WTC11 (cell line): ENCODE measurements at regions of chr5 and their contacts with region 1.

Region 1: DNA sequence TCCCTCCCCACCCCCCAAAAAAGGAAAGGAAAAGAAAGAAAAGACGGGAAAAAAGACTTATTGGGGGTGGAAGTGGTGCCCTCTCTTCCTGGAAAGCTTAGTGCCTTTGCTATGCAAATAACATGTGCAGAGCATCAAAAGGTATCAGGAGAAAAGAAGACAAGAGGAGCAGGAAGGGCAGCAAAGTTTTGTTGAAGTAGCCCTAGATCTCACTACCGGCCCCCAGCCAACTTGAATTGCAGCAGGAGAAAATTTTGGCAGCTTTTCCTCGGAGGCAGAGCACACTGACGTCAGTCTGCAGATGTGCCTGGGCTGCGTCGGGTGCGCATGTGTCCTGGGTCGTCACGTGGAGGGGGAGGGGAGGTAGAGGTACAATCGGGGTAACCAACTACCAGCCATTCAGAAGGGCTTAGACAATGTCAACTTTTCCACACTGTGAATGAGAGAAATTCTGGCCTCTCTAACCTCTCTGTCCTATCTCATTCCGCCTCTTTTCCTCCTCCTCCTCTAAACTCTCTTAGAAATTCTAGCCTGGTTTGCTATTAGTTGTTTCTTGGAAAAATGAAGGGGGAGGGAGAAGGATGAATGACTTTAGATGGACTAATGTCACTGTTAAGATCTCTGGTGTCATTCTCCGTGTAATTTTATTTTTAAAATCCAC is at the start of gene ADAMTS6:
- DNase-seq: peak; percentile 64
- ATAC-seq: peak; percentile 82
- H3K4me3 Mint-ChIP-seq: no peak within 1 kb of the TSS
- H3K27ac Mint-ChIP-seq: peak within 1 kb of the TSS; percentile 98
- H3K4me1 Mint-ChIP-seq: peaks cover 16% of the 10 kb centered on the region
- H3K27me3 Mint-ChIP-seq: no peaks in the 10 kb centered on the region
- CTCF ChIP-seq: no peak
- total RNA-seq, gene ADAMTS6: 2.6 to 3.5 TPM (median 2.8 TPM) in 3 replicates

Region 2: DNA sequence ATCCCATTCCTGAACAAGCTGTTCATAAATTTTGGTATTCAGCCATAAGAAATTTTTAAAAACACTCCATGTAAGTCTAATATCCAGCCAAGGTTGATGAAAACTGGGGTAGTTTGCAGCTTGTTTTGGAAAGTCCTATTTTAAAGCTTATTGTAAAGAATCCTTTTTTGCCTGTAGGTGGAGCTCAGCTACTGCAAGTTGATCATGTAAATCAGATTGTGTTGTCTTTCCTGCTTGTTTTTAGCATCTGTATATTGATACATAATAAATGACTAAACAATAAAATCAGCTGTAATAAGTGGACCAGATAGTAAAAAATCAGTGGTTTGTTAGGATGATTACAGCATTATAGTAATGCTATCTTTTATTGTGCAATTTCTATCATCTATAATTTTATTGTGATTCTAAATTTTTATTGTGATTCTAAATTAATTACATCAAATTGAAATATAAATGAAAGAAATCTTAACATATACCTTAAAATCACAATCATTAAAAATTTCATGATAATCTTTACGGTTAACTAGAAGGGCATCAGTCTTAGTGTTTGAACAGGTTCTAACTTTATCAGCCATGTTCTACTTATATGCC is 670.6 kb before region 1 on chr5:
- CTCF ChIA-PET with region 1: interaction called, 43 read pairs
- POLR2A ChIA-PET with region 1: no interaction called
- DNase-seq: no peak
- ATAC-seq: no peak
- H3K4me3 Mint-ChIP-seq: no peak overlapping the region
- H3K27ac Mint-ChIP-seq: no peak overlapping the region
- H3K4me1 Mint-ChIP-seq: no peaks in the 10 kb centered on the region; the same call in 1 of the 2 replicates
- H3K27me3 Mint-ChIP-seq: no peaks in the 10 kb centered on the region
- CTCF ChIP-seq: 0 out of 2 replicates have a peak, but pooled peaks have one; percentile 28

Region 3: DNA sequence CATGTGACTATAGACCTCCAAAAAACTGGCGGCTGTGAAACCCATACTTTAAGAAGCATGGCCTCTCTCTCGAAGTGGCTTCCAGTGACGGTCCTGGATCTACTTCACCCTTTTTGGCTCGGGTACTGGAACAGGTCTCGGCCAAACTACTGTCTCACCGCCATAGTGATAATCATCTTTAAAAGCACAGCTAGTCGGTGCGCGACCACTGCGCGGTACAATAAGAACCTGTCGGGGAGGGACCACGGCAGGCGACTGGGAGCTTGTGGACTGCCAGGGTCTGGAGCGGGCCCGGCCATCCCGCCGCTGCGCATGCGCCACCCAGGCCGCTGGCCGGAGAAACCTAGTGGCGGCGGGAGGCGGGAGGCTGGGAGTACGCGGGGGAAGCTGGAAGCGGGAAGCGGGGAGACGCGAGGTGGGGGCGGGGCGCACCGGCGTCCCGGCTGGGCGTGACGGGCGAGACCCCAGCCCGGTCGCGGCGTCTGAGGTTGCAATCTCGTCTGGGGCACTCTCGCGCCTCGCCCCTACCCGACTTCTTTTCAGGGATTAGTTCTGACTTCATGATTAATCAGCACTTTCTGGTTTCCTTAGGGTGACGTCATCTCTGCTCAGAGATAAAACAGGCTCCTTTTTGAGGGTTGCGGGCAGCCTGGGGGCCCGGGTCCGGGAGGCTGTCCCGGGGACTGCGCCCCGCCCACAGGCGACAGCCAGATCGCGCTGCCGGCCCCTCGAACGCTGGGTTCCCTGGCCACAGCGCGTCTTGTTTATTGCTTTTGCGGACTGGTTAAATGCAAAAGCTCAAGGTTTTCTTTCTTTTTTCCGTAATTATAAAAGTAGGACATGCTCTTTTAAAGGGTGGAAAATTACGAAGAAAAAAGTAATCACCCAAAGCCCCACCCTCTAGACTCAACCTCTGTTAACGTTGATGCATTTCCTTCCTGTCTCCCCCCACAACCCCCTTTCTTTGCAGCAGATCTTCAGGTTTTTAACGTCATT is 446.3 kb before region 1 on chr5:
- CTCF ChIA-PET with region 1: interaction called, 11 read pairs
- POLR2A ChIA-PET with region 1: interaction called, 4 read pairs
- DNase-seq: peak; percentile 94
- ATAC-seq: peak; percentile 88
- H3K4me3 Mint-ChIP-seq: peak overlapping the region; percentile 70
- H3K27ac Mint-ChIP-seq: peak overlapping the region; percentile 96
- H3K4me1 Mint-ChIP-seq: peaks cover 37% of the 10 kb centered on the region
- H3K27me3 Mint-ChIP-seq: peaks cover 17% of the 10 kb centered on the region
- CTCF ChIP-seq: no peak

Region 4: GRCh38 chr5:65102828-65103711 is 378.7 kb before region 1 on chr5:
- CTCF ChIA-PET with region 1: interaction called, 66 read pairs
- POLR2A ChIA-PET with region 1: interaction called, 13 read pairs
- DNase-seq: peak; percentile 62
- ATAC-seq: peak; percentile 69
- H3K4me3 Mint-ChIP-seq: peak overlapping the region; percentile 77
- H3K27ac Mint-ChIP-seq: peak overlapping the region; percentile 97
- H3K4me1 Mint-ChIP-seq: peaks cover 33% of the 10 kb centered on the region
- H3K27me3 Mint-ChIP-seq: peaks cover 7% of the 10 kb centered on the region
- CTCF ChIP-seq: no peak

Region 5: GRCh38 chr5:65570598-65571226 is 88.9 kb after region 1 on chr5:
- CTCF ChIA-PET with region 1: no interaction called
- POLR2A ChIA-PET with region 1: no interaction called
- DNase-seq: no peak
- ATAC-seq: no peak
- H3K4me3 Mint-ChIP-seq: no peak overlapping the region
- H3K27ac Mint-ChIP-seq: no peak overlapping the region
- H3K4me1 Mint-ChIP-seq: no peaks in the 10 kb centered on the region
- H3K27me3 Mint-ChIP-seq: no peaks in the 10 kb centered on the region
- CTCF ChIP-seq: no peak